ENCODE measurements at regions of chrX and their contacts with region 1.

Region 1: GRCh38 chrX:78119521-78120227 is 15.6 kb downstream of the PGK1 start:
- DNase-seq: peak; percentile 9
- H3K4me3 Mint-ChIP-seq: no peak overlapping the region
- H3K27ac Mint-ChIP-seq: peak overlapping the region; percentile 71
- H3K4me1 Mint-ChIP-seq: peaks cover 57% of the 10 kb centered on the region
- H3K27me3 Mint-ChIP-seq: no peaks in the 10 kb centered on the region

Region 2: GRCh38 chrX:78109458-78109857 is 10.2 kb before region 1 on chrX:
- CTCF ChIA-PET with region 1: interaction called, 4 read pairs
- intact Hi-C with region 1: loop called (anchors 2 kb)
- DNase-seq: no peak
- H3K4me3 Mint-ChIP-seq: peak overlapping the region; percentile 32
- H3K27ac Mint-ChIP-seq: peak overlapping the region; percentile 54
- H3K4me1 Mint-ChIP-seq: peaks cover 52% of the 10 kb centered on the region
- H3K27me3 Mint-ChIP-seq: no peaks in the 10 kb centered on the region

Region 3: DNA sequence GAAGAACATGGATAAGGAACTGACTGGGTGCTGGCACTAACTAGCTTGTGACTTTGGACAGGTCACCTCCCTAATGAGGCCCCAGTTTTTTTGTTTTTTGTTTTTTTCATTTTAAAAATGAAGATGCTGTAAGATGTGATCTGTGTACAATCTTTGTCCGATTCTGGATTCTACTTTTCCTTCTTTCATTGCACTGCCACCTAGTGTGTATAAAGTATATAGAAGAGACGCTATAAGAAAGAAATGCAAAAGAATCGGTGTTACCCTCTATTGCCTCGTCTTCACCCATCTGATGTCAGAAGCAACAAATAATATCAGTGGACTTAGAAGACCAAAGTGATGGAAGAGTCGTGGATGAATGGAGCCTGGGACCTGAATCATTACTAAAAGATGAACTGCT is 766.9 kb after region 1 on chrX:
- CTCF ChIA-PET with region 1: no interaction called
- intact Hi-C with region 1: loop called (anchors 10 kb)
- DNase-seq: no peak
- H3K4me3 Mint-ChIP-seq: no peak overlapping the region
- H3K27ac Mint-ChIP-seq: no peak overlapping the region
- H3K4me1 Mint-ChIP-seq: peaks cover 9% of the 10 kb centered on the region
- H3K27me3 Mint-ChIP-seq: no peaks in the 10 kb centered on the region

Measured in activated naive CD4-positive, alpha-beta T cell treated with anti-CD3 and anti-CD28 coated beads for 36 hours (primary cell).